Caco-2 (cell line): ENCODE measurements at regions of chr17 and their contacts with region 1.

Region 1: DNA sequence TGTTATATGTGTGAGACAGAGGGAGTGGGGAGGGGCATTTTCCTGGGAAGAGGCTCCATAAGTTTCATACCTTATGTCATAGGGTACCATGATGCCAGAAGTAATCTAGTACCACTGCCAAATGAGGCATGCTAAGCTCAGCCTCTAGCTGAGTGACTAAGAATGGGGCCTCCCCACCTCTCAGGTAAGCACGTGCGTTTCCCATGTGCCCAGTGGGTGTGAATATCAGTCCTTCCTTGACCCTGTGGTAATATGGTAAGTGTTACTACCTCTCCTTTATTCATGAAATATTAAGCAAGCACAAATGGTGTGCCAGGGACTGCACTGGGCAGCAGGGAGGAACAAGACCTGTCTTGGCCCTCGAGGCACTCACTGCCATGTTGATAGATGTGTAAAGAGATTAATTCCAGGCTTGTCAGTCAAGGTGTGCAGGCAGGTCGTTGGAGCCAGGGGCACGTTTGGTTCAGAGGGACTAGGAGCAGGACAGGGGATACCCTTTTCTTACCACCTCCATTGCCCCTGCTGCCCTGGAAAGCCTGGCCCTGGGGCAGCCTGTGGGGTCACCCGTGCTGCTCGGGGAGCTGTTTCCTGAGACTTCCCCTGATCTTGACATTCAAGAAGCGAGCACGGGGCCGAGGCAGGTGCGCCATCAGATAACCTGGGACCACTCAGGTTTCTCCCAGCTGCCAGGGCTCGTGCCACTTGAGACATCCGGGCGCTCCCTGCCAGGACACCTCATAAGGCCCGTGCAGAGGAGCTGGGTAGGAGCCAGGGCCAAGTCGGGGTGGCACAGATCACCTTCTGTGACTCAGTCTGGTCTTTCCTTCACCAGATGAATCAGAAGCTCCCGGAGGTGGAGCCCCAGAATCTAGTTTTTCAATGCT is 8.8 kb downstream of the RSAD1 start:
- DNase-seq: no peak
- H3K4me3 ChIP-seq: no peak overlapping the region
- H3K4me3 Mint-ChIP-seq: no peak overlapping the region
- H3K27ac Mint-ChIP-seq: no peak overlapping the region
- H3K4me1 ChIP-seq: no peaks in the 10 kb centered on the region; the same call in 1 of the 2 replicates
- H3K4me1 Mint-ChIP-seq: peaks cover 6% of the 10 kb centered on the region
- H3K27me3 ChIP-seq: no peaks in the 10 kb centered on the region
- H3K27me3 Mint-ChIP-seq: no peaks in the 10 kb centered on the region
- CTCF ChIP-seq: no peak

Region 2: GRCh38 chr17:50501054-50501453 is 13.6 kb after region 1 on chr17:
- CTCF ChIA-PET with region 1: interaction called, 11 read pairs
- POLR2A ChIA-PET with region 1: no interaction called
- intact Hi-C with region 1: loop called (anchors 1 kb)
- DNase-seq: peak in 1 of 2 experiments; percentile 71
- H3K4me3 ChIP-seq: no peak overlapping the region
- H3K4me3 Mint-ChIP-seq: no peak overlapping the region
- H3K27ac Mint-ChIP-seq: no peak overlapping the region
- H3K4me1 ChIP-seq: peaks cover 19% of the 10 kb centered on the region
- H3K4me1 Mint-ChIP-seq: peaks cover 15% of the 10 kb centered on the region
- H3K27me3 ChIP-seq: no peaks in the 10 kb centered on the region
- H3K27me3 Mint-ChIP-seq: no peaks in the 10 kb centered on the region
- CTCF ChIP-seq: peak; percentile 75 to 81

Region 3: DNA sequence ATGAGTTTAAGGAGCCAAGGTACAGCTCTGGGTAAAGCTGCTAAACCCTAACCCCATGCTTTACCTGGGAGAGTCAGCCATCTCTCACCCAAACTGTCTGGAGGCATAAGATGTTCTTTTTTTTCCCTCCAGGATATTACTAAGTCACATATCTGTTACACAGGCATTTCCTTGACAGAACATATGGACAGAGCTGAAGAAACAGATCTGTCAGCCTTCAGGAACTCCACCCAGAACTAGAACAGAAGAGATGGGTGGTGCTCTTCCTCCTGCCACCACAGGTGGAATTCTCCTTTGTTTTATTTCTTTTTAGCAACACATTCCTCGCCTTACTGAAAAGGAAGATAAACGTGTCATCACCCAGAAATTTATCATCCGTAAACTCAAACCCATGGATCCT is 29.5 kb after region 1 on chr17:
- CTCF ChIA-PET with region 1: no interaction called
- POLR2A ChIA-PET with region 1: no interaction called
- intact Hi-C with region 1: loop called (anchors 1 kb)
- DNase-seq: no peak
- H3K4me3 ChIP-seq: no peak overlapping the region
- H3K4me3 Mint-ChIP-seq: no peak overlapping the region
- H3K27ac Mint-ChIP-seq: no peak overlapping the region
- H3K4me1 ChIP-seq: peaks cover 4% of the 10 kb centered on the region; the same call in 1 of the 2 replicates
- H3K4me1 Mint-ChIP-seq: peaks cover 23% of the 10 kb centered on the region
- H3K27me3 ChIP-seq: no peaks in the 10 kb centered on the region
- H3K27me3 Mint-ChIP-seq: no peaks in the 10 kb centered on the region
- CTCF ChIP-seq: no peak